ENCODE measurements at regions of chr5 and their contacts with region 1.

Region 1: DNA sequence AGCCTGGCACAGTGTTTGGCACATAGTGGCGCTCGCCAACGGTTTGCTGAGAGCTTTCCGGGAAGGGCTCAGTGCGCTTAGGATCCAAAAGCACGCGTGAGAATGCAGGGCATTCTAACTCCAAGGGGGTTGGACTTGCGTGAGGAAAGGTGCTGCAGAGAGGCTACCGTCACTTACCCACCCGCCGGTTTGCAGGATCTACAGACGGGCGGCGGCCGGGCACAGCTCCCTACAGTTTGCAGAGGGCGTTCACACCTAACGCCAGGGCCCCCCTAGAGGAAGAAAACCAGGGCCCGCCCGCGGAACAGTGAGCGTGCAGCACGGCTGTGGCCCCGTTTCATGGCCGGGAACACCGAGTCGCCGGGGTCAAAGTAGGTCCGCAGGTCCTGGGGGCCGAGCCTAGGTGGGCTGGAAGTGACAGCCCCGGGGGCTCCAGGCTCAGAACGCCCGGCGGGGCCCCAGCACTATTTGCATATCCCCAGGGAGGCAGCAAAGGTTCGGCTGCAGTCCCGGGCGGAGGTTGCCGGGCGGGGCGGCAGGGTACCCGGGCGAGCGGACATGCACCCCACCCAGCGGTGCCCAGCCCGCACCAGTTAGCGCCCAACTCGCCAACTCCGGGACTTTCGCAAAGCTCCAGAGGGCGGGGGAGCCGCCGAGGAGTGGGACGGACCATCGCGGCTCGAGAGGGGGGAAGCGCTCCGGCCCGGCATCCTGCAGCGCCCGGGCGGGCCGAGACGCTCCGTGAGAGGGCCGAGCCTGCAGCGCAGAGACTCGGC is 526 bp upstream of the GALNT10 start:
- DNase-seq: peak; percentile 74 to 86 (median 80)
- H3K4me3 ChIP-seq: peak overlapping the region; percentile 60
- H3K4me3 Mint-ChIP-seq: peak overlapping the region; percentile 84 to 95 (median 90)
- H3K27ac ChIP-seq: peak overlapping the region; percentile 76
- H3K27ac Mint-ChIP-seq: peak overlapping the region; percentile 40 to 93 (median 84)
- H3K4me1 ChIP-seq: peaks cover 29% of the 10 kb centered on the region
- H3K4me1 Mint-ChIP-seq: peaks cover 43 to 54% (median 50%) of the 10 kb centered on the region in 3 donors
- H3K27me3 ChIP-seq: no peaks in the 10 kb centered on the region
- H3K27me3 Mint-ChIP-seq: peaks cover 0 to 3% of the 10 kb centered on the region in 2 donors

Region 2: DNA sequence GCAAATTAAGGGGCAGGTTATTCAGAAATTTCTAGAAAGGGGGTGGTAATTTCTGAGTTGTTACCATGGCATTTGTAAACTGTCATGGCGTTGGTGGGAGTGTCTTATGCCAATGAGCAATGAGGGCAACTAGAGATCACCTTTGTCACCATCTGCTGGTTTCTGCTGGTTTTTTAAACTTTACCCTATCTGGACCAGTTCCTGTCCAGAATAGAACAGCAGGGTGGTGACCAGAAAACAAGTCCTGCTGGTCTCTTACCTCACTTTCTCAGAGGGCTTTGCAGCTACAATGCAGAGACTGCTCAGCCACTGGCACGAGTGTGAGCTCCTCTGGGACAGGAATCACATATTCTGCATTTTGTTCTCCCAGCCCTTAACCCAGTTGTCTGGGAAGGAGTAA is 202.7 kb before region 1 on chr5:
- CTCF ChIA-PET with region 1: no interaction called
- POLR2A ChIA-PET with region 1: no interaction called
- DNase-seq: no peak
- H3K4me3 ChIP-seq: no peak overlapping the region
- H3K4me3 Mint-ChIP-seq: no peak overlapping the region
- H3K27ac ChIP-seq: no peak overlapping the region
- H3K27ac Mint-ChIP-seq: peak overlapping the region in 1 of 8 donors; percentile 27
- H3K4me1 ChIP-seq: no peaks in the 10 kb centered on the region
- H3K4me1 Mint-ChIP-seq: no peaks in the 10 kb centered on the region
- H3K27me3 ChIP-seq: no peaks in the 10 kb centered on the region
- H3K27me3 Mint-ChIP-seq: no peaks in the 10 kb centered on the region

Region 3: DNA sequence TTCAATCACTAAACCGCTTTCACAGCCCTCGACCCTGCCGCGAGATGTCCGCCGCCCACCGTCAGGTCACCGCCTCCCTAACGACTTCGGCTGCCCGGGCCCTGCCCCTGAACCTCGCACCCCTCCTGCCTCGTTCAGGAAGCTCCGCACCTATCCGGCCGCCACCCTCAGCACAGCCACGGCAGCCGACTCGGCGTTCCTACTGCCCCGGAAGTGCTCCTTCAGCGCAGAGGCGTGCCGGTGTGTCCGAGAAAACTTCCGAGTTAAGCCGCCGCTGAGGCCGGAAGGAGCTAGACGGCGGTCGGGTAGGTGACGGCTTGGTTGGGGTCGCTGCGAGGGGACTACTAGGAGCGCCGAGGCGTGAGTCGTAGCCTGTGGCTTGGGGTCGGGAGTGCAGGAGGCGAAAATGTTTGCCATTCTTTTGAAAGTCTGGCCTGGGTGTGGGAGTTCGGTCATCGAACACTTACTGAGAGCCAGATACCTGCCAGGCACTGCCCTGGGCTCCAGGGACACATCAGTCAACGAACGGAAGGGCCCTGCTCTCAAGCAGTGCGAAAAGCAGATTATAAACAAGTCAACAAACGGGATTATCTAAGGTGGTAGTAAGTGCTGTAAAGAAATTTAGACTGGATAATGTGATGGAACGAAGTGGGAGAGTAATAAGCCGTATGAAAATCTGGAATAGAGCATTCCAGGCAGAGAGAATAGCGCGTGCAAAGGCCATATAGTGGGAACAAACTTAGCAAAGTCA is 151.1 kb before region 1 on chr5 and contains the starts of genes FAM114A2 and MFAP3:
- CTCF ChIA-PET with region 1: interaction called, 5 read pairs
- POLR2A ChIA-PET with region 1: interaction called, 20 read pairs
- DNase-seq: peak; percentile 82 to 93 (median 86)
- H3K4me3 ChIP-seq: peak within 1 kb of the TSS; percentile 97
- H3K4me3 Mint-ChIP-seq: peak within 1 kb of the TSS; percentile 96 to 98 (median 97)
- H3K27ac ChIP-seq: peak within 1 kb of the TSS; percentile 92
- H3K27ac Mint-ChIP-seq: peak within 1 kb of the TSS; percentile 97 to 99 (median 98)
- H3K4me1 ChIP-seq: peaks cover 28% of the 10 kb centered on the region
- H3K4me1 Mint-ChIP-seq: peaks cover 51 to 72% (median 69%) of the 10 kb centered on the region in 3 donors
- H3K27me3 ChIP-seq: no peaks in the 10 kb centered on the region
- H3K27me3 Mint-ChIP-seq: peaks cover 0 to 3% of the 10 kb centered on the region in 2 donors
- total RNA-seq, gene FAM114A2: 23.4 to 26.6 TPM
- total RNA-seq, gene MFAP3: 17.5 to 20.5 TPM